ENCODE measurements at regions of chrX and their contacts with region 1.

Region 1: GRCh38 chrX:31423609-31424189 is 351.9 kb upstream of the FTHL17 start:
- DNase-seq: peak; percentile 7 to 40 (median 10)
- ATAC-seq: peak; percentile 40; the same call in 1 of the 3 replicates
- H3K4me3 ChIP-seq: no peak overlapping the region
- H3K27ac ChIP-seq: no peak overlapping the region
- H3K4me1 ChIP-seq: no peaks in the 10 kb centered on the region
- H3K27me3 ChIP-seq: no peaks in the 10 kb centered on the region
- CTCF ChIP-seq: peak in 2 of 3 experiments; percentile 33 to 36; a peak in 3 of 6 replicates
- EP300 ChIP-seq: no peak
- POLR2A ChIP-seq: no peak
- RAD21 ChIP-seq: peak; percentile 18 to 56; a peak in 3 of 4 replicates

Region 2: GRCh38 chrX:31213941-31214340 is 209.8 kb before region 1 on chrX:
- CTCF ChIA-PET with region 1: no interaction called
- POLR2A ChIA-PET with region 1: no interaction called
- in situ Hi-C with region 1: no loop called
- intact Hi-C with region 1: loop called (anchors 5 kb)
- DNase-seq: peak; percentile 5 to 17 (median 9)
- ATAC-seq: peak; percentile 67
- H3K4me3 ChIP-seq: no peak overlapping the region
- H3K27ac ChIP-seq: no peak overlapping the region
- H3K4me1 ChIP-seq: no peaks in the 10 kb centered on the region
- H3K27me3 ChIP-seq: no peaks in the 10 kb centered on the region
- CTCF ChIP-seq: peak; percentile 45 to 61 (median 51)
- EP300 ChIP-seq: no peak
- POLR2A ChIP-seq: no peak
- RAD21 ChIP-seq: peak; percentile 46 to 64

Region 3: DNA sequence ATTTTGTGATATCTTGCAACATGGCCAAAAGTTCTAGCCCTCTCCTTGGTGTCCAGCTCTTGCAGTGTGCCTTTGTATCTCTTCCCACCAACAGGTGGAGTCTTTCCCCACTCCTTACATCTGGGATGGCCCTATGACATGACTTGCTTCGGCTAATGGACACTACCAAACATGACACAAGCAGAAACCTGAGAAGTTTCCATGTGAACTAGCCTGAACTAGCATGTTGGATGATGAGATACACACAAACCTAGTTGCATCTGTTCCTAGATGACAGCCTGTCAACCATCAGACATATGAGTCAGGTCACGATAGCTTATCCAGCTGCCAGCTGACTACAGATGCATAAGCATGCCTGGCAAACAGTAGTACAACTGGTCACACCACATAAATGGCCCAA is 144.3 kb before region 1 on chrX:
- CTCF ChIA-PET with region 1: no interaction called
- POLR2A ChIA-PET with region 1: no interaction called
- in situ Hi-C with region 1: no loop called
- intact Hi-C with region 1: loop called (anchors 1 kb)
- DNase-seq: peak in 3 of 4 experiments; percentile 10 to 37 (median 27)
- ATAC-seq: peak; percentile 85
- H3K4me3 ChIP-seq: no peak overlapping the region
- H3K27ac ChIP-seq: no peak overlapping the region
- H3K4me1 ChIP-seq: no peaks in the 10 kb centered on the region
- H3K27me3 ChIP-seq: no peaks in the 10 kb centered on the region
- CTCF ChIP-seq: peak in 2 of 3 experiments; percentile 40 to 47; a peak in 3 of 6 replicates
- EP300 ChIP-seq: no peak
- POLR2A ChIP-seq: no peak
- RAD21 ChIP-seq: peak; percentile 41 to 67

Measured in K562 (cell line).